ENCODE measurements at regions of chr19 and their contacts with region 1.

Region 1: GRCh38 chr19:18291590-18292461 is 10.4 kb upstream of the JUND start:
- DNase-seq: peak; percentile 95
- H3K4me3 Mint-ChIP-seq: peak overlapping the region; percentile 86
- H3K27ac Mint-ChIP-seq: peak overlapping the region; percentile 98
- H3K4me1 Mint-ChIP-seq: peaks cover 69% of the 10 kb centered on the region
- H3K27me3 Mint-ChIP-seq: no peaks in the 10 kb centered on the region

Region 2: DNA sequence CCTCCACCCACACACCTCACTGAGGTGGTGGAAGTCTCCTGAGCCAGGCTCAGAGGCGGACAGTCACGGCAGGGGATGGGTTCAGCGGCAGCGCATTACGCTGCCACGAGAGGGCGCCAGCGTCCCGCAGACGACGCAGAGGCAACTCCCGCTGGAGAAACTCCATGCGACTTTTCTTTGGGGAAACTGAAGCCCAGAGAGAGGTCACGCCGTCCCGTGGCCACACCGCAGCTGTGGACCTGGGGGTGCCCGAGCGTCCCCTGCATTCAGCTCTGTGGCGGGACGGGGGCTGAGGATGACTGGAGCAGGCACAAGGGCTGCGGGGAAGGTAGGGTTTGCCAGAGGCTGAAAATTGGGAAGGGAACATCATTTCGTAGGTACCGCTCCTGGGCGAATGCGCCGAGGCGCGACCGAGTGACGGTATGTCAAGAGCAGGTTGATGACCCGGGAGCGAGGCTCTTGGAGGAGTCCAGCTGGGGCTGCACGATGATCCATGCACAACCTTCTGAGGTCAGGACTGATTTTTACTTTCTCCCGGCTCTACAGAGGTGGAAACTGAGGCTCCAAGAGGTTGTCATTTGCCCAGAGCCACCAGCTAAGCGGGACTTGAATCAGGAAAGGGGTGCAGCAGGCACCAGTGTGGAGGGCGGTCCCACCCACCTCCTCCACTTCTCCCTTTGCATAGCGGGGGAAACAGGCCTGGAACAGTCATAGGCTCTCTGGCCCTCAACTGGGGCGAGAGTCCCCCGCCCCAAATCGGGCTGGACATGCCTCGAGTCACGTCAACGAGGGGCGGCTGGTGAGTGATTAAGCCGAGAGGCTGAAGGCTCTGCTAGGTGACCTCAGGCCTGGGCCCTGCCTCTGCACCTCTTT is 284.5 kb before region 1 on chr19:
- intact Hi-C with region 1: loop called (anchors 10 kb)
- DNase-seq: peak; percentile 96
- H3K4me3 Mint-ChIP-seq: peak overlapping the region; percentile 92
- H3K27ac Mint-ChIP-seq: peak overlapping the region; percentile 93
- H3K4me1 Mint-ChIP-seq: peaks cover 33% of the 10 kb centered on the region
- H3K27me3 Mint-ChIP-seq: no peaks in the 10 kb centered on the region

Region 3: GRCh38 chr19:18063463-18063862 is 228.4 kb before region 1 on chr19:
- intact Hi-C with region 1: no loop called
- DNase-seq: peak; percentile 79
- H3K4me3 Mint-ChIP-seq: no peak overlapping the region
- H3K27ac Mint-ChIP-seq: no peak overlapping the region
- H3K4me1 Mint-ChIP-seq: peaks cover 3% of the 10 kb centered on the region
- H3K27me3 Mint-ChIP-seq: no peaks in the 10 kb centered on the region

Region 4: GRCh38 chr19:18091217-18091608 is 200.6 kb before region 1 on chr19:
- intact Hi-C with region 1: loop called (anchors 5 kb)
- DNase-seq: peak; percentile 93
- H3K4me3 Mint-ChIP-seq: peak overlapping the region; percentile 61
- H3K27ac Mint-ChIP-seq: peak overlapping the region; percentile 91
- H3K4me1 Mint-ChIP-seq: peaks cover 49% of the 10 kb centered on the region
- H3K27me3 Mint-ChIP-seq: no peaks in the 10 kb centered on the region

Region 5: DNA sequence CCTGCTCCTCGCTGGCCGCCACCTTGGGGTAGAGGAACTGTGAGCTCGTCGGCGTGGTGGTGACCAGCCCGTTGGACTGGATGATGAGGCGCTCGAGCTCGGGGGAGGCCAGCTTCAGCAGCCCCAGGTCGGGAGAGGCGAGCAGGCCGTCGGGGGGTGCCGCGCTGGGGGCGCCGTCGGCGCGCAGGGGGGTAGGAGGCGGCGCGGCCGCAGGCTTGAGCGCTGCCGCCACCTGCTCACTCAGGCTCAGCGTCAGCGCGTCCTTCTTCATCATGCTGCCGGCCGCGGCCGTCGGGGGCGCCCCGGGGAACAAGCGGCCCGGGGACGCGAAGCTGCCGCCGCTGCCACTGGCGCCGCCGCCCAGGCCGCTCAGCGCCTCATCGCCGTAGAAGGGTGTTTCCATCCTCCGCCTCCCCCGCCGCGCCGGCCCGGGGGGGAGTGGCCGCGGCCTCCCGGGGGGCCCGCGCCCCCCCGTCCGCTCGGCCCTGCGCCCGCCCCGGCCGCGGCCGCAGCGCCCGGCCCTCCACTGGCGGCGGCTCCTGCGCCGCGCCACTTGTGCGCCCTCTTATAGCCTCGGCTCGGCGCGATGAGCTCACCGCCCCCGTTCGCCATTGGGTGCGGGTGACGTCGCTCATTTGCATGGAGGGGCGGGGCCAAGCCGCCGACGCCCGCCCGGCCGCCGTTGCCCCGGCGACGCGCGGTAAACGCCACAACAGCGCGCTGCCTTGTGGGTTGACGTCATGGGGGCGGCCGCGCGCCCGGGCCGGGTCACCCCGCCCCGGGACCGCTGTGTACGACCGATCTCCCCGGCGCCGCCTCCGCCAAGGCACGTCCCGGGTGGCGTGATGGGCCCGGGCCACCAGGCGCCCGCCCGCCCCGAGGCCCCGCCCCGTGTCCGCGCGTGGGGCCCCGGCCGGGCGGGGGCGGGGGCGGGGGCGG is 10.5 kb before region 1 on chr19 and contains the start of gene JUND:
- intact Hi-C with region 1: loop called (anchors 1 kb)
- DNase-seq: peak; percentile 99
- H3K4me3 Mint-ChIP-seq: peak within 1 kb of the TSS; percentile 99
- H3K27ac Mint-ChIP-seq: peak within 1 kb of the TSS; percentile 98
- H3K4me1 Mint-ChIP-seq: peaks cover 46% of the 10 kb centered on the region
- H3K27me3 Mint-ChIP-seq: peaks cover 1% of the 10 kb centered on the region
- total RNA-seq, gene JUND: 382 and 413 TPM in 2 replicates

Region 6: GRCh38 chr19:18304458-18305310 is 12.9 kb after region 1 on chr19:
- intact Hi-C with region 1: loop called (anchors 1 kb)
- DNase-seq: peak; percentile 94
- H3K4me3 Mint-ChIP-seq: peak overlapping the region; percentile 94
- H3K27ac Mint-ChIP-seq: peak overlapping the region; percentile 98
- H3K4me1 Mint-ChIP-seq: peaks cover 43% of the 10 kb centered on the region
- H3K27me3 Mint-ChIP-seq: no peaks in the 10 kb centered on the region

Region 7: DNA sequence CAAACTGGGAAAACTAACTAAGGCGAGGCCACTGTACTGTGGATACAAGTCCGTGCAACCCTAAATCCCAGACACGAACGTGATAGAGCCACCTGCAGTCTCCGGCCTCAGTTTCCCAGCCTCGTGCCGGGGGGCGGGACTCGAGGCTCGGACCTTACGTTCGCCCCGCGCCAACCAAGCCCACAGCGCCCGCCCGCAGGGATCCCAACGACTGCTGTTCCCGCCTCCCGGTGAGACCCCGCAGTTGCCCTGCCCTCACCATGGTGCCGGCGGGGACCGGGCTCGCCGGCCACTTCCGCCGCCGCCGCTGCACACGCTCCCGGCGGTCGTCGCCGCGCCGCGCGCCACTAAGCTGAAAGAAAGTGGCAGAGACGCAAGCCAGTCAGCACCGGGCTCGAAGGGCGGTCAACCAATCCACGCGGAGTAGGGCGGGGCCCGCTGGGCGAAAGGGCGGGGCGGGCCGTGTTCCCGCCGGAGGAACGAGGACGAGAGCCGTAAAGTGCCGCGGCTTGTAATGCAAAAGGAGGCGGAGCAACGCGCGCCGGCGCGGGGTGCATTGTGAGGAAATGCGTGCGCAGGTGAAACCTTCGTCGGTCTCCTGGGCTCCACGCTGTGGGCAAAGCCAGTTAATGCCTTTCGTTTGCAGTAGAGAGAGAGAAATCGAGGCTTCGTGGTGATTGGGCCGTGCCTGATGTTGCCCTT is 31.1 kb after region 1 on chr19 and contains the start of gene LSM4:
- intact Hi-C with region 1: loop called (anchors 1 kb)
- DNase-seq: peak; percentile 100
- H3K4me3 Mint-ChIP-seq: peak within 1 kb of the TSS; percentile 96
- H3K27ac Mint-ChIP-seq: peak within 1 kb of the TSS; percentile 95
- H3K4me1 Mint-ChIP-seq: peaks cover 48% of the 10 kb centered on the region
- H3K27me3 Mint-ChIP-seq: no peaks in the 10 kb centered on the region
- total RNA-seq, gene LSM4: 217 and 225 TPM in 2 replicates

Region 8: GRCh38 chr19:18419195-18419698 is 127.4 kb after region 1 on chr19 and contains the start of gene SSBP4:
- intact Hi-C with region 1: loop called (anchors 5 kb)
- DNase-seq: peak; percentile 94
- H3K4me3 Mint-ChIP-seq: peak within 1 kb of the TSS; percentile 99
- H3K27ac Mint-ChIP-seq: peak within 1 kb of the TSS; percentile 89
- H3K4me1 Mint-ChIP-seq: peaks cover 72% of the 10 kb centered on the region
- H3K27me3 Mint-ChIP-seq: no peaks in the 10 kb centered on the region
- total RNA-seq, gene SSBP4: 154 TPM in 2 replicates

Measured in activated CD4-positive, alpha-beta T cell treated with anti-CD3 and anti-CD28 coated beads, Interleukin-2, amount 10 ng/mL, durations not matched to agents 24 days and 14 days (primary cell).